ENCODE measurements at regions of chr10 and their contacts with region 1.

Region 1: DNA sequence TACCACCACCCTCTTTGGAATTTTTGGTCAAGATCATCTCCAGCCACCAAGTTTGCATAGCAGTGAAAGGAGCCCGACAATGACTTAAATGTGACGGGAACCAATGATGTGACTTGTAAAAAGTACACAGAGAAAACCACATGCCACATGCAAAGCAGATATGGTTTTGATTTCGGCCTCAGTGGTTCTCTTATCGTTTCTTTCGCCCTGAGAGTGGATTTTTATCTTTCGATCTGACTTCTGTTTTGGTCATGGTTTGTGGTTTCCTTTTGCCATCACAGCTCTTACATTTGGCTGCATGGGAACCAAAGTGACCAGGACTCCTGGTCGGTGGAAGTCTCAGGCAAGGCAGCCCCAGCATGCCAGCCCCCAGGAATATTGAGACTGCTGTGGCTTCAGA is 31.5 kb downstream of the TCF7L2 start:
- DNase-seq: peak; percentile 73
- H3K4me3 Mint-ChIP-seq: no peak overlapping the region
- H3K27ac Mint-ChIP-seq: no peak overlapping the region
- H3K4me1 Mint-ChIP-seq: peaks cover 24% of the 10 kb centered on the region
- H3K27me3 Mint-ChIP-seq: peaks cover 61% of the 10 kb centered on the region

Region 2: DNA sequence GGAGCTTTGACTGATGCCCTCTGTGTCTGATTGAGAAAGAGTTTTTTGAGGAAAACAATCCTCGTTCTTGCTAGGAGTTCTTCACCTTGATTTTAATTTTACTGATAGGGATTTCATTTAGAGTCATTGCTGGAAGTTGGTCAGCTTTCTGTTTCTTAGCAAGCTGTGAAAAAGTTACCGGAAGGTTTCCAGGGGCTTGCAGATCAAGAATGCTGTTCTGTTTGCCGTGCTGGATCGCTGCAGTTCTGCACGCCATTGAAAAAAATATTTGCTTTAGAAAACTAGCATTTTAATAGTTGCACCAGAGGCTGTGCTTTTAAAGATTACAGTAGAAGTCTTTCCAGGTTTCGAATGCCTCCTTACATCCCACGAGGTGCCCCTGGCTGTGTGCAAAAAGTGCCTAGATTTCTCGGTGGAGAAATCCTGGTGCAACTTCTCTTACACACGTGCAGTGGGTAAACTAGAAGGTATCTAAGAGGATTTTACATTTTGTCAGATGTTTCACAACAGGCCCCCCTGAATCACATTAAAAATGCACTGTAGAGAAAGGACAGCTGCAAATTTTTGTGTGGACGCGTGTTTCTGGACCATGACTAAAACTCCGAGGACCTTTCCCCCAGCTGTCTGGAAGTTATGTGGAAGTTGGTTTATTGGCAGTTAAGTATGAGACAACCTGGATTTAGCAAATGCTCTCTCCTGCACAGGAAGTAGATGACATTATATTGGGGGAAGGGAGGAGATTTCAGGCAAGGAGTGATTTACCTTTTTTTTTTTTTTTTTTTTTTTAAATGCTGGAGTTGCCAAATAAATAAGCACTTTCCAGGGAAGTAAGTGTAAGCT is 25.8 kb before region 1 on chr10:
- CTCF ChIA-PET with region 1: no interaction called
- intact Hi-C with region 1: no loop called
- DNase-seq: no peak
- H3K4me3 Mint-ChIP-seq: no peak overlapping the region
- H3K27ac Mint-ChIP-seq: no peak overlapping the region
- H3K4me1 Mint-ChIP-seq: peaks cover 25% of the 10 kb centered on the region
- H3K27me3 Mint-ChIP-seq: peaks cover 56% of the 10 kb centered on the region

Region 3: GRCh38 chr10:113007032-113007771 is 25.6 kb after region 1 on chr10:
- CTCF ChIA-PET with region 1: no interaction called
- intact Hi-C with region 1: loop called (anchors 1 kb)
- DNase-seq: peak; percentile 68
- H3K4me3 Mint-ChIP-seq: peak overlapping the region; percentile 64
- H3K27ac Mint-ChIP-seq: peak overlapping the region; percentile 48
- H3K4me1 Mint-ChIP-seq: peaks cover 25% of the 10 kb centered on the region
- H3K27me3 Mint-ChIP-seq: peaks cover 78% of the 10 kb centered on the region

Region 4: DNA sequence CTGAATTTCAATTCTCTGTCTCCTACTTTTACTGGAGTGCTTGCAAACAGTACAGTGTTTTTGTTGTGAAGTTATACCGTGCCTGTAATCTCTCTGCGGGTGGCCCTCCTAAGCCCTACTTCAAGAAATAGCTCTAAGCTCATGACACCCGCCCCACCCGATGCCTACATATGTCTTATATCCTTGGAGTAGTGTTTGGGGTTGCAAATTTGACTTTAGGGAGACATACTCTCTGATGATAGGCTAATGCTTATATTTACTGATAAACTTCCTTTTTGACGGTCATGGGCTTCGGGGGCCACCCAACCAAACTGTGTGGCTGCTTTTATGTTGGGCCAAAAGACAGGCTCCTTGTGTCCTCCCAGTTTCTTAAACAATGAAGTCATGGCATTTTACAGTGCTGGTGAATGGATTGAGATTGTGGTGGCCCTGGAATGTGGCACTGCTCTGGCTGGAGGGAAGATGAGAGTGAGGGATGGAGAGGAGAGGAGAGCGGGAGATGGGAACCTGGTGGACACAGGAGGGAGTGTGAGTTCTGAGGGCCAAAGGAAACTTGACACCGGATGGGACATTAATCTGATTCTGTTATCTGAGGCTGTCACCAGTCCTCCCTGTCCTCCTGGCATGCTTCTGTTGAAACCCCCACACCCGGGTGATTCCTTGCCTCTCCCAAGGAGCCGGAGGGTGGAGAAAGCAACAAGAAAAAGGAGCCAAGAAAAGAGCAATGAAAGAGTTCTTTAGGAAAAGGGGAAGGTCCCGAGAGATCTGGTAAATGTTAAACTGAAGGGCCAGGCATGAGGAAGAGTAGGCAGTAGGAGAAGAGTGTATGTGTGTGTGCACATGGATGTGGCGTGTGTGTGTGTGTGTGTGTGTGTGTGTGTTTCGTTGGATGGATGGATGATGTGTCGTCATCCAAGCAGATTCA is 81.8 kb after region 1 on chr10:
- CTCF ChIA-PET with region 1: no interaction called
- intact Hi-C with region 1: no loop called
- DNase-seq: no peak
- H3K4me3 Mint-ChIP-seq: no peak overlapping the region
- H3K27ac Mint-ChIP-seq: no peak overlapping the region
- H3K4me1 Mint-ChIP-seq: no peaks in the 10 kb centered on the region
- H3K27me3 Mint-ChIP-seq: peaks cover 2% of the 10 kb centered on the region

Region 5: DNA sequence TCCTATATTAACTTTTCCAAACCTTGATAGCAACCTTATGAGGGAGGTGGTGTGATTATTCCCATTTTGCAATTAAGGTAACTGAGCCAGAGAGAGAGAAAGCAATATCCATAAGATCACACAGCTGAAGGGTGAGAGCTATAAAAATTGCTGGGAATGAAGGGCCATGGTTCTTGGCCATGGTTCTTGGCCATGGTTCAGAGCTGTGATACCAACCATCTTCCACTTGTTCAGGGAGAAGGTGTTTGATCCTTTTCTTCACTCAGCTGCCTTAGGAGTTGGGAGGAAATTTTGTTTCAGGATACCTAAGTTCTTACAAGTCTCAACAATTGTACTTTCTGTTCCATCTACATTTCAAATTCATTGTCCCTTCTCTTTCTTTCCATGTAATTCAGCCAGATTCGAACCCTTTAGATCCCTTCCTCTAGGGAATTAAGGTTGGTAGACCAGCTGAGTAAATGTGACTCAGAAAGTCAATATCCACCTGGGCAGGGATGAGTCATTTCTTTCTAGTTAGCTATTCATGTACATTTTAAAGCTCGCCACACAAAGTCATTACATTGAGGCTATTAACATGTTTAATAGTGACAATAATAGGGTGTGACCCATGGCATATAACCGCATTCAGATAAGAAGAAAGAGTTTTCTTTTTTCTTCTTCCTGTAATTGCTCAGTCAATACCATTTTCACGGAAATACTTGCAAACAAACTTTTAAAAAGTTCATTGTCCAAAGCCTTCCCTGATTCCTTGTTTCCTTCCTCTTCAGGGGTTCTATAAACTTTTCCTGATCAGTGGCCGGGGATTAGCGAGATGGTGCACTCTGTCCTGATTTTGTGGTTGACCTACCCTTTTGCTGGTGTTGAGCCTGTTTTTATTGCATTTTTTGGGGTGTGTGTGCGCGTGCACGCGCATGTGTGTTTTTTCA is 111.9 kb after region 1 on chr10:
- CTCF ChIA-PET with region 1: no interaction called
- intact Hi-C with region 1: loop called (anchors 1 kb)
- DNase-seq: no peak
- H3K4me3 Mint-ChIP-seq: no peak overlapping the region
- H3K27ac Mint-ChIP-seq: peak overlapping the region; percentile 4
- H3K4me1 Mint-ChIP-seq: peaks cover 23% of the 10 kb centered on the region
- H3K27me3 Mint-ChIP-seq: no peaks in the 10 kb centered on the region

Region 6: DNA sequence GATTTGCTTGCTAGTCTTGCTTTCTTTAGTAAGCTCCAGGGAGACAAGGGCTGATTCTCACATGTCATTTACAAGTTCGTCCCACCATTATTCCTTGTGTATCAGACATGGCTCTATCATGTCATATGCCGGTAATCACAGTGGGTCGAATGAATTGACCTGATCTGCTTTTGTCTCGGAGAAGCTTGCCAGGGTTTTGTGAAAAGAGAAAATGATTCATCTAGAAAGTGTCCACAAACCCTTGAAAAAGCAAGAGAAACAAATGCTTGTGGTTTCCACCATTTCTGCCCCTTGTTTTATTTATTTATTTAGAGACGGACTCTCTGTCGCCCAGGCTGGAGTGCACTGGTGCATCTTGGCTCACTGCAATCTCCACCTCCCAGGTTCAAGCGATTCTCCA is 247.0 kb after region 1 on chr10:
- CTCF ChIA-PET with region 1: no interaction called
- intact Hi-C with region 1: loop called (anchors 1 kb)
- DNase-seq: no peak
- H3K4me3 Mint-ChIP-seq: no peak overlapping the region
- H3K27ac Mint-ChIP-seq: no peak overlapping the region
- H3K4me1 Mint-ChIP-seq: peaks cover 22% of the 10 kb centered on the region
- H3K27me3 Mint-ChIP-seq: peaks cover 35% of the 10 kb centered on the region

Measured in activated naive CD4-positive, alpha-beta T cell treated with anti-CD3 and anti-CD28 coated beads for 36 hours (primary cell).